Heart left ventricle (tissue), 16 donors: ENCODE measurements at regions of chr5 and their contacts with region 1.

Region 1: DNA sequence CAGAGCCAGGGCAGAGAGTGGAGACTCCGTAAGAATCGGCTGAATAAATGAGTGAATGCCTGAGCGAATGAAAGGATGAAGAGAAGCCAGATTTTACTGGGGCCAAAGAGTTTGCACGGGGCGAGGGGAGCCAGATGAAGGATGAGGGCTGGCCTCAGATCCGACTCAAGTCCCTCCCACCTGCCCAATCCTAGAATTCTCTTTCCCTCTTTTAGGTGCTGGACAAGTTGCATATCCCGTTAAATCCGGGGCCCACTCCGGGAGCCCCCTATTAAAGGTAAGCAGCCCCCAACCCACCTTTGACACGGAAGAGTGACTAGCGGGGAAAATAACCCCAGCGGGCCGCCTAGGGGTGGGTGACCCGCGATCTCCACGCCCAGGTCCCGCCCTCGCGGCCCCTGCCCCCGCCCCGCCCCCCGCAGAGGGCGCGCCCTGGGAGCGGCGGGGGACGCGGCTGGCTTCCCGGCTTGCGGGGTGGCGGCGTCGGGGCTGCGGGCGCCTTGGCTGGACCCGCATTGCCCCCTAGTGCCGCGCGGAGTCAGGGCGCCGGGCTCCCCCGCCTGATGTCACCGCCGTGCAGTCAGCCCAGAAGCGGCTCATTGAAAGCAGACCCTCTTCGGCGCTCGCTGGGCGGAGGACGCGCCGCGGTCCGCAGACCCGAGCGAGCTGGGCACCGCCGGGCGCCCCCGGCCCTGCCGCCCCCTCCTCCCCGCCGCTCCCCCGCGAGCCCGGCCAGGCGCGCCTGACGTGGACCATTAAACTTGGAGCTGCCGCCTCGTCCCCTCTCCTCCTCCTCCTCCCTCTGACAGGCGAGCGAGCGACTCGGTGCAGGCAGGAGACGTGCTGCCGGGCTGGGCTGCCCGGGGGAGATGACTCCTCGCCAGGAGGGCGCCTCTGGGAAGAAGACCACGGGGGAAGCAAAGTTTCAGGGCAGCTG is at the start of gene ADRA1B:
- DNase-seq: peak; percentile 71 to 87 (median 73)
- ATAC-seq: peak; percentile 45 to 91 (median 88)
- H3K4me3 ChIP-seq: peak within 1 kb of the TSS; percentile 19 to 71 (median 55)
- H3K27ac ChIP-seq: peak within 1 kb of the TSS in 11 of 12 donors; percentile 20 to 82 (median 64)
- H3K4me1 ChIP-seq: peaks cover 0 to 44% (median 3%) of the 10 kb centered on the region in 12 donors
- H3K27me3 ChIP-seq: peaks cover 0 to 37% (median 0%) of the 10 kb centered on the region in 9 donors
- CTCF ChIP-seq: peak in 11 of 12 donors; percentile 43 to 74 (median 62)
- POLR2A ChIP-seq: no peak
- total RNA-seq, gene ADRA1B: 1.1 to 5.4 (median 2.3) TPM

Region 2: GRCh38 chr5:159286420-159287035 is 629.6 kb before region 1 on chr5:
- intact Hi-C with region 1: loop called in 2 of 10 experiments (anchors 10 kb)
- DNase-seq: no peak
- ATAC-seq: peak in 2 of 4 donors; percentile 54 to 55
- H3K4me3 ChIP-seq: no peak overlapping the region
- H3K27ac ChIP-seq: no peak overlapping the region
- H3K4me1 ChIP-seq: peaks cover 0 to 6% (median 0%) of the 10 kb centered on the region in 12 donors
- H3K27me3 ChIP-seq: no peaks in the 10 kb centered on the region
- CTCF ChIP-seq: peak; percentile 13 to 63 (median 43)
- POLR2A ChIP-seq: no peak

Region 3: GRCh38 chr5:159444441-159445082 is 471.6 kb before region 1 on chr5:
- intact Hi-C with region 1: loop called in 8 of 10 experiments (anchors 2 to 10 kb)
- DNase-seq: no peak
- ATAC-seq: peak in 1 of 4 donors; percentile 34
- H3K4me3 ChIP-seq: no peak overlapping the region
- H3K27ac ChIP-seq: no peak overlapping the region
- H3K4me1 ChIP-seq: peaks cover 0 to 28% (median 7%) of the 10 kb centered on the region in 12 donors
- H3K27me3 ChIP-seq: no peaks in the 10 kb centered on the region
- CTCF ChIP-seq: peak in 9 of 12 donors; percentile 9 to 55 (median 42)
- POLR2A ChIP-seq: no peak

Region 4: DNA sequence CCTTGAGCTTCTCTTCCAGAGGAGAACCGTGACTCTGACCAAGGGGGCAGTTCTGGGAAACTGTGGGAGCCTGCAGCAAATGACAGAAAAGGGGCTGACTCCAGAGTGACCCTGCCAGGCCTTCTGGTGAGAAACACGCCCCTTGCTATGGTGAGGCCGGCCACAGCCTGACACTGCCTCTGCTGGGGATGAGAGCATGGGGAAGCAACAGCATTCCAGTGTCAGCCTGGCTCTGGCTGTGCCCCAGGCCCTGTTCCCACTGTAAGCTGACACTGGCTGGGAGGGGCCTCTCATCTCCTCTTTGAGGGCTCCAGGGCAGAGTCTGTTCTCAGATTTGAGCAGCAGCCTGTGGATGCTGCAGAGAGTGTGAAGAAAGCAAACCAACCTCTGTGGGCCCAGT is 405.9 kb before region 1 on chr5:
- intact Hi-C with region 1: loop called in 8 of 10 experiments (anchors 5 to 10 kb)
- DNase-seq: peak; percentile 79 to 91 (median 86)
- ATAC-seq: peak; percentile 94 to 97 (median 96)
- H3K4me3 ChIP-seq: no peak overlapping the region
- H3K27ac ChIP-seq: peak overlapping the region; percentile 54 to 90 (median 80)
- H3K4me1 ChIP-seq: peaks cover 0 to 33% (median 14%) of the 10 kb centered on the region in 12 donors
- H3K27me3 ChIP-seq: no peaks in the 10 kb centered on the region
- CTCF ChIP-seq: peak in 3 of 12 donors; percentile 23 to 34 (median 24)
- POLR2A ChIP-seq: peak in 1 of 2 donors; percentile 47

Region 5: DNA sequence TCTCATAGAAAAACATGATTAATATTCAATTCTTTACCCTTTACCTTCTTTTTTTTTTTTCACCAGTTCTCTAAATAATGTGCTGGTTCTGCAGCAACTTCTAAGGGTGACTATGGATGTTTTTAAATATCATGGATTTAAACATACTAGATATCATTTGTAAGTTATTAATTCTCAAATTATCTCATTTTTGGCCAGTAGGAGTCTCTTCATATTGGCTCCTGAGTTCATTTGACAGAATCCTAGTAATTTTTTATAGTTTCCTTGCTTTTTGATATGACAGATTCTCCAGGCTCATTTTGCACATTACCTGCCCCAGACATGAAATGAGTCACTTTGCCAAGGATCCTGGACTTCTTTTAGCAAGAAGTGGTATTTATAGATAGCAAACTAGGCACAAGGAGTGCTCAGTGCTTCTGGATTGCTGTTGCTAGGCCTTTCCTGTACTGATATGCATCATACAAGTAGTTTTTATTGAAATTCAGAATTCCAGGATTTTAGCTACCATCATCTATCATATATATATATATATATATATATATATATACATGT is 384.5 kb before region 1 on chr5:
- intact Hi-C with region 1: loop called in 1 of 10 experiments (anchors 5 kb)
- DNase-seq: no peak
- ATAC-seq: no peak
- H3K4me3 ChIP-seq: no peak overlapping the region
- H3K27ac ChIP-seq: no peak overlapping the region
- H3K4me1 ChIP-seq: no peaks in the 10 kb centered on the region
- H3K27me3 ChIP-seq: no peaks in the 10 kb centered on the region
- CTCF ChIP-seq: peak in 3 of 12 donors; percentile 26 to 37 (median 32)
- POLR2A ChIP-seq: no peak

Region 6: GRCh38 chr5:159773062-159773924 is 142.9 kb before region 1 on chr5:
- intact Hi-C with region 1: loop called in 1 of 10 experiments (anchors 10 kb)
- DNase-seq: peak; percentile 76 to 91 (median 89)
- ATAC-seq: peak; percentile 78 to 99 (median 97)
- H3K4me3 ChIP-seq: peak overlapping the region in 10 of 12 donors; percentile 26 to 57 (median 44)
- H3K27ac ChIP-seq: peak overlapping the region; percentile 40 to 91 (median 84)
- H3K4me1 ChIP-seq: peaks cover 0 to 15% (median 5%) of the 10 kb centered on the region in 12 donors
- H3K27me3 ChIP-seq: peaks cover 0 to 30% (median 0%) of the 10 kb centered on the region in 9 donors
- CTCF ChIP-seq: peak in 10 of 12 donors; percentile 9 to 57 (median 24)
- POLR2A ChIP-seq: peak; percentile 28 to 80